A549 (cell line): ENCODE measurements at regions of chr5 and their contacts with region 1.

Region 1: DNA sequence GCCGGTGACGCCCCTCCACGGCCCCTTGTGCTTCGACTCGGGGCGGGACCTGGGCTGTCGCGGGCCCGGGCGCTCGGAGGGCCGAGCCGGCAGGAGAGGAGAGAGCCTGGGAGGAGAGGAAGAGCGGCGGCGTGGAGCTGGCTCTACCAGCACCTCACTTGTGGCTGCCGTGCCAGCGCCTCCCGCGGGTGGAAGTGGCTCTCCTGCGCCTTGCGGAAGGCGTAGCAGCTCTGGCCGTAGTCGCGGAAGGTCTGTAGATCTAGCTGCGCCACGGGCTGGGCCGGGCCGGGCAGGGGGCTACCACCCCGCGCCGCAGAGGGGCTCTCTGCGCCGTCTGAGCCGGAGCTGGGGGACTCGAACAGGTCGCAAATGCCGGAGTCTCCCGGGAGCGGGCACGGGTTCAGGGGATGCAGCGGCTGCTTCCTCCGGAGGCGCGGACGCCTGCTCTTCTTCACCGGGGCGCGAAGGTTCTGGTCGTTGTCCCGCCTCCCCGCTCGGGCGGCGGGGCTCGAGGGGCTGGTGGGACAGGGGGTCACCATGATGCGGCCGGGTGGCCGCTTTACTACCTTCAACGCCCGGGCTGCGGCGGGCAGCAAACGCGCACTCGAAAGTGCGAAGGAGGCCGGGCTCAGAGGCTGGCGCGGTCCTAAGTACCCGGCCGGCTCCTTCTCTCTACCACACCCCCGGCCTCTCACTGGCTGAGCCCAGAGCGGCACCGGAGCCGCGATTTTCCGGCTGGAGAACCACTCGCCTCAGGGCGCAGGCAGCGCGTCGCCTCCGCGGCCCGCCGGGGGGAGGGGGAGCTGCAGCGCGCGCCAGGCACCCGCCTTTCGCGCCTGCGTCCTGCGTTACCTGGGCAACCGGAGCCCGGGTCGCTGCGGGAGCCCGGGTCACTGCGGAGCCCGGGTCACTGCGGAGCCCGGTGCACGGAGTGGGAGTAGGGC is at the start of gene CCNO:
- DNase-seq: peak; percentile 80 to 82
- ATAC-seq: peak; percentile 88 to 94
- H3K4me3 ChIP-seq: peak within 1 kb of the TSS; percentile 74
- H3K27ac ChIP-seq: peak within 1 kb of the TSS; percentile 74 to 94
- H3K4me1 ChIP-seq: peaks cover 9% of the 10 kb centered on the region; the same call in 1 of the 3 replicates
- CTCF ChIP-seq: no peak
- EP300 ChIP-seq: no peak
- POLR2A ChIP-seq: peak; percentile 51; the same call in 1 of the 2 replicates
- RAD21 ChIP-seq: no peak
- polyA plus RNA-seq, gene CCNO: 2.2 and 2.6 TPM in 2 replicates

Region 2: GRCh38 chr5:55307383-55308253 is 74.4 kb after region 1 on chr5 and contains the starts of genes DHX29 and MTREX:
- CTCF ChIA-PET with region 1: interaction called, 4 read pairs
- POLR2A ChIA-PET with region 1: interaction called, 22 read pairs
- DNase-seq: peak; percentile 89 to 92
- ATAC-seq: peak; percentile 97 to 98
- H3K4me3 ChIP-seq: peak within 1 kb of the TSS; percentile 97
- H3K27ac ChIP-seq: peak within 1 kb of the TSS; percentile 91 to 96
- H3K4me1 ChIP-seq: peaks cover 36% of the 10 kb centered on the region
- CTCF ChIP-seq: no peak
- EP300 ChIP-seq: no peak
- POLR2A ChIP-seq: peak; percentile 83
- RAD21 ChIP-seq: no peak
- polyA plus RNA-seq, gene DHX29: 12.3 and 22.4 TPM in 2 replicates
- polyA plus RNA-seq, gene MTREX: 45.8 and 99.8 TPM in 2 replicates